PC-3 (cell line): ENCODE measurements at regions of chr10 and their contacts with region 1.

Region 1: GRCh38 chr10:50653142-50653541 is 29.4 kb upstream of the SGMS1 start:
- DNase-seq: peak; percentile 83
- ATAC-seq: peak; percentile 94
- H3K4me3 ChIP-seq: no peak overlapping the region
- H3K27ac ChIP-seq: no peak overlapping the region
- H3K4me1 ChIP-seq: 0 out of 2 replicates have a peak, but pooled peaks cover 3% of the 10 kb centered on the region
- H3K27me3 ChIP-seq: 0 out of 2 replicates have a peak, but pooled peaks cover 3% of the 10 kb centered on the region
- CTCF ChIP-seq: peak; percentile 98

Region 2: DNA sequence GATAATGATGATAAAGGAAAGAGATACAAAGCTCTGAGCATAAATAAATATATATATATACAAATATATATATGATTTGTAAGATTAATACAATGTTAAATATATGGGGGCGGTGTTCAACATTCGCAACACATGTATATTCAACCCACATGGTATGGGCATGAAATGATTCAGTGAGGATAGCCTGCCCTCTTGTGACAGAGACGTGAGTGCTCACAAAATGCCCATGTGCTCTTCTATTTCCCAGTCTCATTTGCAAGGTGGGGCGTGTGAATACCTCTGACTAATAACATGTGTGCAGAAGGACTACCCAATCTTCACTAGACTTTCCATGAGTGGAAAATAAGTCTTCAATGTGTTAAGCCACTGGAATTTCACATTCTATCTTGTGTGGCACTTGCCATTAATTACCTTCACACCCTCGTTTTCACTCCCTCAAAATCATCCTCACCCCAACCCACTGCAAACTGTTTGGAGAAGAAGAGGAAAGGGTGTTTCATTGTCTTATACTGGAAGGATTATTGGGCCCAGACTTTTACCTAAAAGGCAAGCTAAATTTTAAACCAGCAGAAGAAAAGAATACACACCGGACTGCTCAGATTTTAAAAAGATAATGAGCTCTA is 428.7 kb before region 1 on chr10:
- CTCF ChIA-PET with region 1: no interaction called
- POLR2A ChIA-PET with region 1: no interaction called
- intact Hi-C with region 1: loop called (anchors 10 kb)
- DNase-seq: peak; percentile 99
- ATAC-seq: peak; percentile 99
- H3K4me3 ChIP-seq: no peak overlapping the region
- H3K27ac ChIP-seq: no peak overlapping the region
- H3K4me1 ChIP-seq: peaks cover 6% of the 10 kb centered on the region
- H3K27me3 ChIP-seq: peaks cover 8% of the 10 kb centered on the region; the same call in 1 of the 2 replicates
- CTCF ChIP-seq: peak; percentile 97

Region 3: GRCh38 chr10:50367732-50368131 is 285.4 kb before region 1 on chr10:
- CTCF ChIA-PET with region 1: no interaction called
- POLR2A ChIA-PET with region 1: no interaction called
- intact Hi-C with region 1: loop called (anchors 1 kb)
- DNase-seq: peak; percentile 94
- ATAC-seq: peak; percentile 89
- H3K4me3 ChIP-seq: no peak overlapping the region
- H3K27ac ChIP-seq: no peak overlapping the region
- H3K4me1 ChIP-seq: peaks cover 12% of the 10 kb centered on the region
- H3K27me3 ChIP-seq: no peaks in the 10 kb centered on the region
- CTCF ChIP-seq: peak; percentile 98

Region 4: GRCh38 chr10:50552771-50553535 is 100.2 kb before region 1 on chr10:
- CTCF ChIA-PET with region 1: no interaction called
- POLR2A ChIA-PET with region 1: no interaction called
- intact Hi-C with region 1: loop called (anchors 2 kb)
- DNase-seq: peak; percentile 66
- ATAC-seq: peak; percentile 83
- H3K4me3 ChIP-seq: no peak overlapping the region
- H3K27ac ChIP-seq: no peak overlapping the region
- H3K4me1 ChIP-seq: no peaks in the 10 kb centered on the region
- H3K27me3 ChIP-seq: no peaks in the 10 kb centered on the region
- CTCF ChIP-seq: peak; percentile 86

Region 5: GRCh38 chr10:50561816-50562215 is 91.3 kb before region 1 on chr10:
- CTCF ChIA-PET with region 1: no interaction called
- POLR2A ChIA-PET with region 1: no interaction called
- intact Hi-C with region 1: loop called (anchors 1 kb)
- DNase-seq: peak; percentile 87
- ATAC-seq: peak; percentile 81
- H3K4me3 ChIP-seq: no peak overlapping the region
- H3K27ac ChIP-seq: no peak overlapping the region
- H3K4me1 ChIP-seq: peaks cover 13% of the 10 kb centered on the region
- H3K27me3 ChIP-seq: no peaks in the 10 kb centered on the region
- CTCF ChIP-seq: peak; percentile 100